MCF 10A (cell line): ENCODE measurements at regions of chr10 and their contacts with region 1.

Region 1: DNA sequence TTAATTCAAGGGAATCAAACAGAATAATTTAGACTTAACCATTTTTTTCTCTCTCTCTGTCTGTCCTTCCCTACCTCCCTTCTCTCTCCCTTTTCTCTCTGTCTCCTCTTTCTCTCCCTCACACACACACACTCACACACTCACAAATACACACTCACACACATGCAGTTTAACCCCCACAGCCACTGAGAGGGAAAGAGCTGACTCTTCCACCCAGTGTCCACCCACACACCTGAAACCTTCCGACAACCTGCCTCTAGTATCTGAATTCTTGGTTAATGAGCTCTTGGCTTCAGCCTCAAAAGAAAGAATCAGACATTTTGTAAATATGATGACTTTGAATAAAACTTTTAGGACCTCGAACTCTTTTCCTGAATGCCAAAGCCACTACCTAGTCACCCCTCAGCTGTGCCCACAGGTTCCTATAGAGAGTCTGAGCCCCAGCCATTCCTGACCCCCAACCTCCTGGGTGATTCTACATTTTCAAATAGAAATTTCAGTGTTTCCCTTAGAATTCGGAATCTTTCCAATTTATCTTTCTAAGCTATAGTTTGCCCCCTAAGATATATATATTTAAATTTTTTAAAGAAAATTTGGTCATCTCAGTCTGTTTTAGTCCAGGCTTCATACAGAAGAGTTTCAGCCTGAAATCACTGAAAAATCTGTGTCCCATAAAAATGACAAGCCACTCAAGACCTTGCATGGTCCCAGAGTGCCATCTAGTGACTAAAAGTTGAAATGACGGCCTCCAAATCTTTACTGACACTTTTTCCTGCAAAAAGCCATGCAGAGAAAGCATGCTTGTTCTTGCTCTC is 202.8 kb downstream of the IPMK start:
- DNase-seq: peak; percentile 62
- H3K4me3 Mint-ChIP-seq: no peak overlapping the region
- H3K27ac Mint-ChIP-seq: peak overlapping the region; percentile 30
- H3K4me1 Mint-ChIP-seq: peaks cover 6% of the 10 kb centered on the region
- H3K27me3 Mint-ChIP-seq: no peaks in the 10 kb centered on the region
- CTCF ChIP-seq: peak; percentile 90

Region 2: GRCh38 chr10:58081353-58081752 is 16.4 kb after region 1 on chr10:
- CTCF ChIA-PET with region 1: interaction called, 24 read pairs
- POLR2A ChIA-PET with region 1: no interaction called
- intact Hi-C with region 1: no loop called
- DNase-seq: no peak
- H3K4me3 Mint-ChIP-seq: no peak overlapping the region
- H3K27ac Mint-ChIP-seq: no peak overlapping the region
- H3K4me1 Mint-ChIP-seq: no peaks in the 10 kb centered on the region
- H3K27me3 Mint-ChIP-seq: no peaks in the 10 kb centered on the region
- CTCF ChIP-seq: no peak